CD4-positive, alpha-beta memory T cell (primary cell): ENCODE measurements at regions of chr1 and their contacts with region 1.

Region 1: DNA sequence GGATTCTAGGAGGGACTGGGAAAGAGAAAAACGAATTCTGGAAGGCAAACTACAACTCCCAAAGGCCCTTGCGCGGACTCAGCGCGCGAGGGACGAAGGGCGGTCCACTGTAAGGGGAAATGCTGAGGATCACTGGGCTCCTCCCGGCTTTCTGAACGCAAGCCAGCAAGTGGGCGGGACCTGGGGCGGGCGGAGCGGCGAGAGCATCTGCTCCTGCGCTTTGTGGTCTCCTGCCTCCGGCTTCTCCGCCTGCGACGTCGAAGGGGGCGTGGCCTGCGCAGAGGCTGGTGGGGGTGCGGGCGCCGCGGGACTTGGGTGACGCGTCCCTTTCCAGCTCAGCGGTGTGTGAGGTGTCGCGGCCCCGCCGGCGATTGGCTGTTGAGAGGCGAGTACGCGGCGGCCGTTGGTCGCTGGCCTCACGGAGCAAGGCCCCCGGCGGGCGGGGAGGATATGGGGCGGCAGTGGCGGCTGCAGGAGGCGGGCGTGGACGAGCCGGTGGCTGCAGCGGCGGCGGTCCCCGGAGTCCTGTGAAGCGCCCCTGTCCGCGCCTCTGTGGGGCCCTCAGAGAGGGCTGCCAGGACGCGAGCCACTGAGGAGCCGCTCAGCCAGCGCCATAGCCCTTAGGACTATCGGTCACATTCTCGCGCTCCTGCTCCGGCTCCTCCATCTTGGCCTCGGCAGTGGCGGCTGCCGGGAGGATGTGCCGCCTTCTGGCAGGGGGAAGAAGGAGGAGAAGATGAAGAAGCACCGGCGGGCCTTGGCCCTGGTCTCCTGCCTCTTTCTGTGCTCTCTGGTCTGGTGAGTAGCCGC is at the start of gene SUCO:
- DNase-seq: peak; percentile 99 to 100 (median 100)
- H3K4me3 ChIP-seq: peak within 1 kb of the TSS; percentile 88 to 97
- H3K4me3 Mint-ChIP-seq: peak within 1 kb of the TSS; percentile 93 to 100 (median 97)
- H3K27ac ChIP-seq: peak within 1 kb of the TSS; percentile 99
- H3K27ac Mint-ChIP-seq: peak within 1 kb of the TSS; percentile 97 to 100 (median 100)
- H3K4me1 ChIP-seq: peaks cover 49% of the 10 kb centered on the region
- H3K4me1 Mint-ChIP-seq: peaks cover 37 to 62% (median 46%) of the 10 kb centered on the region in 4 donors
- H3K27me3 ChIP-seq: no peaks in the 10 kb centered on the region
- H3K27me3 Mint-ChIP-seq: peaks cover 0 to 3% of the 10 kb centered on the region in 2 donors
- total RNA-seq, gene SUCO: 71.6 to 74.4 TPM

Region 2: GRCh38 chr1:171781176-171781875 is 751.6 kb before region 1 on chr1 and contains the start of gene METTL13:
- CTCF ChIA-PET with region 1: no interaction called
- POLR2A ChIA-PET with region 1: interaction called, 7 read pairs
- intact Hi-C with region 1: loop called (anchors 1 kb)
- DNase-seq: peak; percentile 98 to 100 (median 99)
- H3K4me3 ChIP-seq: peak within 1 kb of the TSS; percentile 92 to 99
- H3K4me3 Mint-ChIP-seq: peak within 1 kb of the TSS; percentile 94 to 100 (median 96)
- H3K27ac ChIP-seq: peak within 1 kb of the TSS; percentile 71
- H3K27ac Mint-ChIP-seq: peak within 1 kb of the TSS; percentile 86 to 99 (median 98)
- H3K4me1 ChIP-seq: peaks cover 53% of the 10 kb centered on the region
- H3K4me1 Mint-ChIP-seq: peaks cover 37 to 67% (median 48%) of the 10 kb centered on the region in 4 donors
- H3K27me3 ChIP-seq: no peaks in the 10 kb centered on the region
- H3K27me3 Mint-ChIP-seq: no peaks in the 10 kb centered on the region
- total RNA-seq, gene METTL13: 33.3 to 36.7 TPM

Region 3: DNA sequence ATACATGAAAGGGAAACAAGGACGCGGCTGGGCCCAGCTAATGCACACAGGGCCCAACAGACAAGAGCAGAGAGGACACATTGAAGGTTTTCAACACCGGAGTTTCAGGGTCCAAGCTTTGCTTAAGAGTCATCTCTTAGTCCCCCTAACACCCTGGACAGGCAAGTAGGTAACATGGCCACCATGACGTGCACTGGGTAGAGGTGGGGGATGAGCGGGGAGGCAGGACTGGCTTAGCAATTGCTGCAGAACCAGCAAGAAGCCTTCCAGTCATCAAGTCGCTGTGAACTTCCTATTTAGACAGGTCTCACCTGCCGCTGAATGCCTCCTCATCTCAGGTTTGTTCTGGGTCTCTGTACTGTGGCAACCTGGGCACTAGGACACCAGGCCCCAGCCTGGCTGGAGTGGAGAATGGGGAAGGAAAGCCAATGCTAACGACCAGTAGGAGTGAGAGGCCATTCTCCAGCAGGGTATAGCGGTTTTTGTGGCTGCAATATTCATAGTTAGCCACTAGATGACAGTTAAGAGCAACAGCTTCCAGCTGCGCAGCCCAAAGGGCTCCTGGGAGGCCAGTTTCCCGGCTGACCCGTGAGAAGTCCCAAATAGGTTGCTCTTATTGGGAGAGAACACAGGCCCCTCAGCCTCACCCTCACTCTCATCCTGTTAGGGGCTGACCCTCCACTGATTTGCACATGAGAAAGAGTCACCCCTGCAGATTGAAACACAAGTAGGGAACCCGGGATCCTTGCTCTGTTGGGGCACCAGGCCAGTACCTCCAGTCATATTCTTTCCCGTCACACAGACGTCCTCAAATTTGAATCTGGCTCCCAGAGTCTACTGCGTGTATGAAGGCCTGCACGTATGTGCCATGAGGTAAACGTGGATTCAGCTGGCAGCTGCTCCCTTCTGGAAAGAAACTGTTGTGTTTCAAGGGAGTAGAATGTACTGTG is 83.0 kb before region 1 on chr1:
- CTCF ChIA-PET with region 1: interaction called, 8 read pairs
- POLR2A ChIA-PET with region 1: interaction called, 5 read pairs
- intact Hi-C with region 1: loop called (anchors 1 kb)
- DNase-seq: peak; percentile 26 to 46 (median 33)
- H3K4me3 ChIP-seq: no peak overlapping the region
- H3K4me3 Mint-ChIP-seq: peak overlapping the region in 7 of 8 donors; percentile 10 to 69 (median 39)
- H3K27ac ChIP-seq: no peak overlapping the region
- H3K27ac Mint-ChIP-seq: peak overlapping the region in 3 of 7 donors; percentile 34 to 84 (median 70)
- H3K4me1 ChIP-seq: peaks cover 21% of the 10 kb centered on the region
- H3K4me1 Mint-ChIP-seq: peaks cover 5 to 32% (median 20%) of the 10 kb centered on the region in 4 donors
- H3K27me3 ChIP-seq: no peaks in the 10 kb centered on the region
- H3K27me3 Mint-ChIP-seq: no peaks in the 10 kb centered on the region

Region 4: GRCh38 chr1:172699111-172699510 is 166.2 kb after region 1 on chr1:
- CTCF ChIA-PET with region 1: no interaction called
- POLR2A ChIA-PET with region 1: interaction called, 5 read pairs
- intact Hi-C with region 1: loop called (anchors 5 kb)
- DNase-seq: peak; percentile 72 to 92 (median 77)
- H3K4me3 ChIP-seq: peak overlapping the region; percentile 17 to 38
- H3K4me3 Mint-ChIP-seq: peak overlapping the region; percentile 67 to 85 (median 76)
- H3K27ac ChIP-seq: peak overlapping the region; percentile 64
- H3K27ac Mint-ChIP-seq: peak overlapping the region in 6 of 7 donors; percentile 92 to 96 (median 94)
- H3K4me1 ChIP-seq: peaks cover 85% of the 10 kb centered on the region
- H3K4me1 Mint-ChIP-seq: peaks cover 0 to 54% (median 30%) of the 10 kb centered on the region in 4 donors
- H3K27me3 ChIP-seq: no peaks in the 10 kb centered on the region
- H3K27me3 Mint-ChIP-seq: no peaks in the 10 kb centered on the region

Region 5: GRCh38 chr1:173824331-173825081 is 1291.6 kb after region 1 on chr1 and contains the starts of genes CENPL and DARS2:
- CTCF ChIA-PET with region 1: no interaction called
- POLR2A ChIA-PET with region 1: interaction called, 4 read pairs
- intact Hi-C with region 1: loop called (anchors 10 kb)
- DNase-seq: peak; percentile 92 to 96 (median 93)
- H3K4me3 ChIP-seq: peak within 1 kb of the TSS; percentile 93 to 95
- H3K4me3 Mint-ChIP-seq: peak within 1 kb of the TSS; percentile 93 to 99 (median 97)
- H3K27ac ChIP-seq: peak within 1 kb of the TSS; percentile 79
- H3K27ac Mint-ChIP-seq: peak within 1 kb of the TSS; percentile 97 to 99 (median 97)
- H3K4me1 ChIP-seq: peaks cover 18% of the 10 kb centered on the region
- H3K4me1 Mint-ChIP-seq: peaks cover 27 to 46% (median 33%) of the 10 kb centered on the region in 4 donors
- H3K27me3 ChIP-seq: no peaks in the 10 kb centered on the region
- H3K27me3 Mint-ChIP-seq: no peaks in the 10 kb centered on the region
- total RNA-seq, gene CENPL: 9.0 to 10.2 TPM
- total RNA-seq, gene DARS2: 13.4 to 13.5 TPM

Region 6: GRCh38 chr1:174159252-174160108 is 1626.6 kb after region 1 on chr1 and contains the start of gene RABGAP1L:
- CTCF ChIA-PET with region 1: no interaction called
- POLR2A ChIA-PET with region 1: no interaction called
- intact Hi-C with region 1: loop called (anchors 2 kb)
- DNase-seq: peak; percentile 91 to 96 (median 95)
- H3K4me3 ChIP-seq: peak within 1 kb of the TSS; percentile 88 to 95
- H3K4me3 Mint-ChIP-seq: peak within 1 kb of the TSS; percentile 94 to 99 (median 97)
- H3K27ac ChIP-seq: peak within 1 kb of the TSS; percentile 92
- H3K27ac Mint-ChIP-seq: peak within 1 kb of the TSS; percentile 92 to 99 (median 98)
- H3K4me1 ChIP-seq: peaks cover 56% of the 10 kb centered on the region
- H3K4me1 Mint-ChIP-seq: peaks cover 40 to 67% (median 52%) of the 10 kb centered on the region in 4 donors
- H3K27me3 ChIP-seq: no peaks in the 10 kb centered on the region
- H3K27me3 Mint-ChIP-seq: no peaks in the 10 kb centered on the region
- total RNA-seq, gene RABGAP1L: 113 to 114 TPM